ENCODE measurements at regions of chr3 and their contacts with region 1.

Region 1: DNA sequence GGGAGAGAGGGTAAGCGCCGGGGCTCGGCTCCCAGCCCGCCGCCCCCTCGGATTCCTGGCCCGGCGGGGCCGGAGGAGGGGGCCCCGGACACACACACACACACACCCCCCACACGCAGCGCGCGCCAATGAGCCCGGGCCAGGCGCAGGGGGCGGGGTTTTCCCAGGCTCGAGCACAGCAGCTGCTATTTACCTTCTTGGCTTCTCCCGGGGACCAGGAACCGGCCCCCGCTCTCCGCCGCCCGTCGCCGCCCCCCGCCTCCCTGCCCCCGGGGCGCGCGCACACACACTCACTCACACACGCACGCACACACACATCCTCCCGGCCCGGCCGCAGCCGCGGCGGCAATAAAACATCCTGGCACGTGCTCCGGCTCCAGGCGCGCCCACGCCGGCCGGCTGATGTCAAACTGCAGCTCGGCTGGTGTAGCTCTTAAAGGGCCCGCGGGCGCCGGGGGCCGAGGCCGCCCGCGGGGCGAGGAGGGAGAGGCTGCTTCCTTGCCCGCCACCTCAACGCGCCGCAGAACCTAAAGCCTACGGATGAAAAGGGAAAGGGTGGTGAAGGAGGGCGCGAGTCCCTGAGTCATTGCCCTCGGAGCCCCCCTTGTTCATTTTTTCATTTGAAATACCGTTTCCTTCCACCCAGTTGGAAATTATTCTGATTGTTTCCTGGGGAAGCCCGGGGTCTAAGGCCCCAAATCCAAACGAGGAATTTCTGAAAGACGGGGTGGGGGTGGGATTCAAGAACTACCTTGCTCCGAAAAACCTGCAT is 1.0 kb upstream of the HES1 start:
- DNase-seq: peak; percentile 100
- H3K4me3 Mint-ChIP-seq: peak overlapping the region; percentile 92
- H3K27ac Mint-ChIP-seq: peak overlapping the region; percentile 83
- H3K4me1 Mint-ChIP-seq: peaks cover 52% of the 10 kb centered on the region
- H3K27me3 Mint-ChIP-seq: no peaks in the 10 kb centered on the region
- CTCF ChIP-seq: no peak

Region 2: GRCh38 chr3:193780810-193781472 is 354.0 kb before region 1 on chr3:
- CTCF ChIA-PET with region 1: interaction called, 86 read pairs
- intact Hi-C with region 1: loop called (anchors 1 kb)
- DNase-seq: peak; percentile 84
- H3K4me3 Mint-ChIP-seq: no peak overlapping the region
- H3K27ac Mint-ChIP-seq: peak overlapping the region; percentile 97
- H3K4me1 Mint-ChIP-seq: peaks cover 55% of the 10 kb centered on the region
- H3K27me3 Mint-ChIP-seq: no peaks in the 10 kb centered on the region
- CTCF ChIP-seq: peak; percentile 96

Region 3: DNA sequence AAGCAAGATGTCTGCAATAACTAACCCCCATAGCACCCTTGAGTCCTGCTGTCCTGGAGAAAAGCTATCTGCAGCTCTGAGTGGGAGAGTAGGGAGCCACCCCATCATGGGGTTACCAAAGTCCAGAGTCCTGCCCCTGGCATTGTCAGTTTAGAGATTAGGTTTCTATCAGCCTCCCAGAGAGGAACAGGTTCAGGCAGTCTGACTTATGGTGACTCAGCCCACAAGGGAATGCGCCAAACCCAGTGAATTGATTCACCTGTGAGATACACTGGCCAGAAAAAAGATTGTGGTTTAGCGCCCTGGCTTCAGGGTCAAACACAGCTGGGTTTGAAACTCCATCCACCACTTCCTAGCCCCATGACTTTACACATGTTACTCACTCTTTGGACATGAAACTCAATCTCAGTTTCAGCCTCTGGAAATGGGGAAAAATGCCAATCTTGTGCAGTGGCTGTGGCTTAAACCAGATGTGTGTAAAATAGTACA is 262.6 kb before region 1 on chr3:
- CTCF ChIA-PET with region 1: interaction called, 16 read pairs
- intact Hi-C with region 1: loop called (anchors 1 kb)
- DNase-seq: peak; percentile 94
- H3K4me3 Mint-ChIP-seq: no peak overlapping the region
- H3K27ac Mint-ChIP-seq: peak overlapping the region; percentile 70
- H3K4me1 Mint-ChIP-seq: peaks cover 91% of the 10 kb centered on the region
- H3K27me3 Mint-ChIP-seq: no peaks in the 10 kb centered on the region
- CTCF ChIP-seq: no peak

Region 4: GRCh38 chr3:194003125-194004057 is 131.6 kb before region 1 on chr3:
- CTCF ChIA-PET with region 1: interaction called, 19 read pairs
- intact Hi-C with region 1: loop called (anchors 1 kb)
- DNase-seq: peak; percentile 93
- H3K4me3 Mint-ChIP-seq: peak overlapping the region; percentile 68
- H3K27ac Mint-ChIP-seq: peak overlapping the region; percentile 88
- H3K4me1 Mint-ChIP-seq: peaks cover 54% of the 10 kb centered on the region
- H3K27me3 Mint-ChIP-seq: no peaks in the 10 kb centered on the region
- CTCF ChIP-seq: no peak

Region 5: DNA sequence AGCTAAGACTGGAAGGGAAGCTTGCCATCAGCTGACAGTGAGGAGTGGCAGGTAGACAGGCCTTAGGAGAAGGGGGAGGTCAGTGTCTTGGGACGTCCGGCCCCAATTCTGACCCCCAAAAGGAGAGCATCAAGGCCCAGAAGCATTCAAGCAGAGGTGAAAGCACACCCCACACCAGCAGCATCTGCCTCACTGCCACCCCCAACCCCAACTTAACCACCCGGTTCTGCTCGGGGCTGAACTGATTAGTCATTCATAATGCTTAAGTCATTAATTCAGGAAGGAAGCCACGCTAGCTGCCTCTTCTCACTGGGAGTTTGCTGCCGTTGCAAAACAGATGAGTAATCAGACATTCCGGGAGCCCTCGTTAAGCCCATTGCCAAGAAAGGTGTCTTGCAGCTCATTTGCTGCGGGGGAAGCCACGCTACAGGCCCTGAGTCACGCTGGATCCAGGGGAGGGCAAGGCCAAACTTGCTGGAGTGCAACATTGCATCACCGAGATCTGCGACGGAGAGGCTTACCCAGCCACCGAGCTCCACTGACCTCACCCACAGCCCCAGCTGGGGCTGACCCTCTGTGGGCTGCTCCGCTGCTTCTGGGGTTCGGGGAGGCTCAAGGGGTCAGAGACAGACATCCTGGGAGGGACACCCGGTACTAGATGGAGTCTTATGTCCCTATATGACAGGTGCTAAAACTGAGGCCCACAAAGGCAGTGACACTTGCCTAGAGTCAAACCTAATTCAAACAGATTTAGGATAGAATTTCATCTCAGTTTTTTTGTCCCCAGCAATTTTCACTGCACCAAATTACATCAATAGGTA is 45.4 kb before region 1 on chr3:
- CTCF ChIA-PET with region 1: interaction called, 4 read pairs
- intact Hi-C with region 1: loop called (anchors 5 kb)
- DNase-seq: peak; percentile 96
- H3K4me3 Mint-ChIP-seq: peak overlapping the region; percentile 15
- H3K27ac Mint-ChIP-seq: peak overlapping the region; percentile 84
- H3K4me1 Mint-ChIP-seq: peaks cover 58% of the 10 kb centered on the region
- H3K27me3 Mint-ChIP-seq: no peaks in the 10 kb centered on the region
- CTCF ChIP-seq: no peak

Region 6: DNA sequence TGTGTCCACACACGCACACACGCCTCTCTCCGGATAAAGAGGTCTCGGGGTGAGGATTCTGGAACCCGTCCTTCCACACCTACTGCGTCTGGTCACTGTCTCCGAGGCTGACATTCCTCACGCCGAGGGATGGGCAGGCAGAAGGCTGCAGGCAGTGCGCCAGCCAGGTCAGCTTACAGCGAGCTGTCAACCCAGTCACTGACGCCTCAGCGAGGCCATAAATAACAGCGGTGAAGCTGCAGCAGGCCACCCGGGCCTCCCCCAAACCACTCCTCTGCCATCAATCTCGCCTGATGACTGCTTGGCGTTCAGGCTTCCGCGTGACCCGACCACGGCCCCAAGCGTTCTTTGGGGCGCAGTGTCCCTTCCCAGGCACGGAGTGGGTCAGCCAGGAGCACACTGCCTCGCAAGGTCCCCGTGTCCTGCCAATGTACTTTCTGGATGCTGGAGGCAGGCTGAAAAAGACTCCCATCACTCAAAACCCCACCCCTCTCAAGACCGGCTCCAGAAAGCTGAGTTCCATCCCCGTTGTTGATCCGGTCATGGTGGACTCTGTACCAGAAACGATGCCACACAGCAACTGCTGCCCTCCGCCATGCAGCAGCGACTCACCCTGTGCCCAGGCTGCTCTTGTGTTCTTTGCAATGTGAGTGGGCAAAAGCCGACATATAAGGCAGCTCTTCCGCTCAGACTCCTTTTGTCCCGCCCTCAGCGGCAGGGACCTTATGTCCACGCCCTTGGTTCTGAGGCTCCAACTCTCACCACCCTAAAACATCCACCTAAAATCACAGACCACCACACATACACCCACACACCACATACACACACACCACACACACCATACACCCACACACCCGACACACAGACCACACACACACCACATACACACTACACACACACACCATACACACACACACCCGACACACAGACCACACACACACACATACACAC is 189.1 kb after region 1 on chr3:
- CTCF ChIA-PET with region 1: interaction called, 10 read pairs
- intact Hi-C with region 1: loop called (anchors 2 kb)
- DNase-seq: peak; percentile 79
- H3K4me3 Mint-ChIP-seq: no peak overlapping the region
- H3K27ac Mint-ChIP-seq: no peak overlapping the region
- H3K4me1 Mint-ChIP-seq: peaks cover 35% of the 10 kb centered on the region
- H3K27me3 Mint-ChIP-seq: no peaks in the 10 kb centered on the region
- CTCF ChIP-seq: no peak

Region 7: DNA sequence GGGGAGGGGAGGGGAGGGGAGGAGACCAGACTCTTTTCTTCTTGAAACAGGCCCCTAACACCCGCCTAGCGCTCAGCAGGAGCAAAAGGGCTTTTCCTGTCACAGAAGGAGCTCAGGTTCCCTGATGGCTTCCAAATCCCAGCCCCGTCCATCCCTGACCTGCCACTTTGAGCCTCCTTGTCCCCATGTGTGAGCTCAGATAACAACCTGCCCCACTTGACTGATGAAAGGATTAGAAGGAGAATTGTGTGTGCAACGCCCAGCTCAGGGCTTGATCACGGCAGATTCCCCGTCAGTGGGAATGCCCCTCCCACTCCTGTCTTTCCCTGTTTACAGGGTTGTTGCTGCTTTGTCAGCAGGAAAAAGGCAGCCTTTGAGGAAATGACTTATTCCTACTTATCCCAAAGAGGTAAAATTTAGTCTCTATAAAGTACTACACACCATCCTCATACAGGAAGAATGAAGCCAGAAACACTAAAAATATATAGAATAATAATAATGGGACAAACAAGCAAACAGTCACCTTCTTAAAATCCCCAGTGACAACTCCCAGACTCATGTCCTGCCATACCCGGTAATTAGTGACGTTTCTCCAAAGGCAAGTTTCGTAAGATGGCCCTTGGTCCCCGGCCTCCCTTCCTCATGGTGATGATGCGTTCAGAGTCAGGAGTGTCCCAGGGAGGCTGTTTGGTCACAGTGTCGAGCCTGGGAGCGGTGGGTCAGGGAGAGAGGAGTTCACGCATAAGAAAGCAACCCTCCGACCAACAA is 240.7 kb after region 1 on chr3:
- CTCF ChIA-PET with region 1: no interaction called
- intact Hi-C with region 1: no loop called
- DNase-seq: no peak
- H3K4me3 Mint-ChIP-seq: no peak overlapping the region
- H3K27ac Mint-ChIP-seq: no peak overlapping the region
- H3K4me1 Mint-ChIP-seq: no peaks in the 10 kb centered on the region
- H3K27me3 Mint-ChIP-seq: peaks cover 97% of the 10 kb centered on the region
- CTCF ChIP-seq: no peak

Region 8: GRCh38 chr3:194386642-194387041 is 251.7 kb after region 1 on chr3:
- CTCF ChIA-PET with region 1: no interaction called
- intact Hi-C with region 1: no loop called
- DNase-seq: no peak
- H3K4me3 Mint-ChIP-seq: no peak overlapping the region
- H3K27ac Mint-ChIP-seq: no peak overlapping the region
- H3K4me1 Mint-ChIP-seq: no peaks in the 10 kb centered on the region
- H3K27me3 Mint-ChIP-seq: peaks cover 92% of the 10 kb centered on the region
- CTCF ChIP-seq: no peak